ENCODE measurements at regions of chr14 and their contacts with region 1.

Region 1: DNA sequence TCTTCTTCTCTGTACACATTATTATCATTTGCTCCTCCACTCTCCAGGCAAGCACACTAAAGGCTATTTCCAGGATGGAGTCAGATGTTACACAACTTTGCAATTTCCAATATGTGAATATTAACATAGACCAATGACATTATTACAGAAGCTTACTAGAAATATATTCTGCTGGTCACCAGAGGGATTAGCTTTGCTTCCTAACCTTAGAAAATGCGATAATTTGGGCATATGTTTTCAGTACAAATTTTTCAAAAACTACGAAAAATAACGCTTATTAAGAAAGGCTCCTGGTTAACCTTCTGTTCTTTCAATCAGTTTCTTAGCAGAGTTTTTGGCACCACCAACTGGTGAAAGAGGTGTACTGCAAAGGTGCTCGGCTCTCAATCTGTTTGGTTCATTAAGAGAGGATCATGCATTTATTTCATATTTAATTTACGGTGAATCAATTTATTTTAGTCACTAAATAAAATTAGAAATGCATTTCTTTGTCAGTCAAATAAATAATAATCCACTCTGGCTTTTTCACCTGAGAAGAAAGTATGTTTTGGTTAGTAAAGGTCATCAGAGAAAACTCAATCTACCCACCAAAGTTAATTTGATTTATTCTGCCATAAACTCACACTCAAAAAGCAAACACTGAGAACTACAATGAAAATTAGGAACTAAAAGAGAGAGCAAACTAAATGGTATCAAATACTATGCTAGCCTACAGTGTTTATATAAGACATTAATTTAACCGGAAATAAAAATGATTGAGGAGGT is 39.2 kb downstream of the EFCAB11 start:
- DNase-seq: peak; percentile 44 to 78 (median 60)
- H3K4me3 ChIP-seq: no peak overlapping the region
- H3K27ac ChIP-seq: no peak overlapping the region
- H3K4me1 ChIP-seq: peaks cover 6% of the 10 kb centered on the region
- H3K27me3 ChIP-seq: no peaks in the 10 kb centered on the region
- CTCF ChIP-seq: peak; percentile 62 to 94 (median 93)
- EP300 ChIP-seq: no peak
- POLR2A ChIP-seq: no peak

Region 2: DNA sequence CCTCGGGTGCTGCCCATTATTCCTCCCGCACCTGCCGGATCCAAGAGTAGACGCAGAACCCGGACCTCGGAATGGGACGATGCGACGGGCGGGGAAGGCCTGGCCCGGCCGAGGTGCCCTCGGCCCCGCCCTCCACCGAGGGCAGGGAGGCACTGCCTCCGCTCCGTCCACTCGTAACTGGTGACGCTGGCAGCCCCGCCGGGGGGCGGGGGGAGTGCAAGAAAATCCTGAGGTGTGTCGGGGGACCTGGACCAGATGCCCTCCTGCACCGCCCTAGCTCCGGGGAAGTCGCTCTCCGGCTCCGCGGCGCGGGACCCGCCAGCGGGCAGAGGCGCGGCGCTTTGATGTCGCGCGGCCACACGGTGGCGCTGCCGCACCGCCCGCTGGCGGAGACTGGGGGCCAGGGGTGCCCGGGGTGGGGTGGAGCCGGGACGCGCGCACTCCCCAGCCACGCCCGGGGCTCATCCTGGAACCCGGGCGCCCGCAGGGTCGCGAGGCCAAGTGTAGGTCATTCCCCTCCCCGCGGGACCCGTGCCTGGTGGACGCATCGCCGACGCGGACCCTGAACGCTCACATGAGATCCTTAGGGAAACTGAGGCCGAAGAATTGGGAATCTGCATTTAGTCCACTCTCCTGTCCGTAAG is 888.1 kb before region 1 on chr14:
- intact Hi-C with region 1: loop called (anchors 2 to 10 kb)
- DNase-seq: peak; percentile 52 to 79 (median 68)
- H3K4me3 ChIP-seq: peak overlapping the region; percentile 32
- H3K27ac ChIP-seq: no peak overlapping the region
- H3K4me1 ChIP-seq: no peaks in the 10 kb centered on the region
- H3K27me3 ChIP-seq: no peaks in the 10 kb centered on the region
- CTCF ChIP-seq: peak; percentile 91 to 94 (median 91)
- EP300 ChIP-seq: no peak
- POLR2A ChIP-seq: no peak

Region 3: GRCh38 chr14:89033756-89034155 is 881.5 kb before region 1 on chr14:
- intact Hi-C with region 1: loop called (anchors 2 to 10 kb)
- DNase-seq: no peak
- H3K4me3 ChIP-seq: no peak overlapping the region
- H3K27ac ChIP-seq: no peak overlapping the region
- H3K4me1 ChIP-seq: no peaks in the 10 kb centered on the region
- H3K27me3 ChIP-seq: no peaks in the 10 kb centered on the region
- CTCF ChIP-seq: no peak
- EP300 ChIP-seq: no peak
- POLR2A ChIP-seq: no peak

Region 4: DNA sequence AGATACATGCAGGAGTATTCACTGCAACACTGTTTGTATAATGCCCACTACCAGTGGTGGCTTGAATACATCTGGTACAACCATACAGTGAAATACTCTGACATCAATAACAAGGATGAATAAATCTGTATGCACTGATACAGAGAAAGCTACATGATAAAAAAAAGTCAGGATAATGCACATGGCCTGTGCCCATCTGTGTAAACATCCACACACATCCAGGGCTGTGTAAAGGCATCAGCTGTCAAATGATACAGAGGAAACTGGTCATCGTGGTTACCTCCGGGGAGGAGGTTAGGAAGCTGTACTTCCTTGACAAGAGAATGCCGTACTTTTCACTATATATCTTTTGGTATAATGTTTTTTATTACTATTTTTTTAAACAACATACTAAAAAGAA is 674.9 kb before region 1 on chr14:
- intact Hi-C with region 1: loop called in 1 of 4 experiments (anchors 10 kb)
- DNase-seq: no peak
- H3K4me3 ChIP-seq: no peak overlapping the region
- H3K27ac ChIP-seq: no peak overlapping the region
- H3K4me1 ChIP-seq: peaks cover 22% of the 10 kb centered on the region
- H3K27me3 ChIP-seq: no peaks in the 10 kb centered on the region
- CTCF ChIP-seq: no peak
- EP300 ChIP-seq: no peak
- POLR2A ChIP-seq: no peak